Naive thymus-derived CD4-positive, alpha-beta T cell (primary cell): ENCODE measurements at regions of chr15 and their contacts with region 1.

Region 1: DNA sequence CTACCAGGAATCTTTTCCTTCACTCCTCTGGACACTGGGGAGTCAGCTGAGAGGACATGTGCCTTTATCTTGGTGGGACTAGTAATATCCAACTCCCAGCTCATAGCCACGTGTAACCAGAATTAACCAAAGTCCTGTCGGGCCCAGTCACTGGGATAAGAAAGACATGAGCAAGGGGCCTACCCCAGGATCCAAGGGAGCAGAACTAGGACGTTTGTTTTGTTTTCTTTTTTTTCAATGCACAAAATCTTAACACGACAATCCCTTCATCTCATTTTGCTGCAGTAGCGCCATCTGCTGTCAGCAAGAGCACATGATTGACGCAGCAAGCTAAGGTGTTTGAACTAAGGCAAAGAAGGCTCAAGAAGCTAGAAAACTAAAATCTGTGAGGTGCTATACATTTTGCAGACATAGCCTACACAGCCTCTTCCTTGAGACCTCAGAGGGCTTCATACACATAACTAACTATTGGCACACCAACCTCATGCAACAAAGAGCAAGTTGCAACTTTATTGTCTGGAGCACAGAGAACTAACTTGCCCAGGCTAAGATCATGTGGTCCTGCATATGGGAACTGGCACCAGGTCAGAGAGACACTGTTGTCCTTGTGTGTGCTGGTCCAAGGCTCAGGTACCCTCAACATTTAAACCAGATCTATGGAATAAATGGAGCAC is 43.6 kb downstream of the RLBP1 start:
- DNase-seq: peak; percentile 15 to 66 (median 48)
- ATAC-seq: peak; percentile 63
- H3K4me3 ChIP-seq: no peak overlapping the region
- H3K4me3 Mint-ChIP-seq: no peak overlapping the region
- H3K27ac ChIP-seq: no peak overlapping the region
- H3K27ac Mint-ChIP-seq: peak overlapping the region in 2 of 9 donors; percentile 46 to 72
- H3K4me1 ChIP-seq: no peaks in the 10 kb centered on the region
- H3K4me1 Mint-ChIP-seq: peaks cover 5 to 17% (median 7%) of the 10 kb centered on the region in 7 donors
- H3K27me3 ChIP-seq: no peaks in the 10 kb centered on the region
- H3K27me3 Mint-ChIP-seq: no peaks in the 10 kb centered on the region

Region 2: DNA sequence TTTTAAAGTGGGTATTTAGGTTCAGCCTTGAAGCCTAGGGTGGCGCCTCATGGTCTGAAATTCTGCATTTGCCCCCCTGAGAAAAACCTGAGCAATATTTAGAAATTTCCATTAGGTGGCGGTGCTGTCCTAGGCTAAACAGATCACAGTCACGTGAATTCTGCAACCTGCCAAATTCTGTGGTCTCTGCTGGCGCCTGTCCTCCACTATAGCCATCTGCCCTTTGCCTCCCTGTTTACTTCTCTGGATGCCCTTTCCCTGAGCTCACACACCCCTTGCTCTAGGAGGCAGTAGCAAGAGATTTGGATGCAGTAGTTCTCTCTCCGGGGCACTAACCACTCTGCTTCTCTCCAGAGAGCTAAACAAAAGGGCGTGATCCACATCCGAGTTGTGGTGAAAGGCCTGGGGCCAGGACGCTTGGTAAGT is 701.1 kb before region 1 on chr15:
- CTCF ChIA-PET with region 1: no interaction called
- POLR2A ChIA-PET with region 1: no interaction called
- intact Hi-C with region 1: loop called in 1 of 2 experiments (anchors 5 kb)
- DNase-seq: peak in 5 of 9 donors; percentile 22 to 45 (median 40)
- ATAC-seq: peak; percentile 55
- H3K4me3 ChIP-seq: no peak overlapping the region
- H3K4me3 Mint-ChIP-seq: no peak overlapping the region
- H3K27ac ChIP-seq: no peak overlapping the region
- H3K27ac Mint-ChIP-seq: no peak overlapping the region
- H3K4me1 ChIP-seq: no peaks in the 10 kb centered on the region
- H3K4me1 Mint-ChIP-seq: peaks cover 0 to 6% (median 0%) of the 10 kb centered on the region in 7 donors
- H3K27me3 ChIP-seq: no peaks in the 10 kb centered on the region
- H3K27me3 Mint-ChIP-seq: no peaks in the 10 kb centered on the region

Region 3: DNA sequence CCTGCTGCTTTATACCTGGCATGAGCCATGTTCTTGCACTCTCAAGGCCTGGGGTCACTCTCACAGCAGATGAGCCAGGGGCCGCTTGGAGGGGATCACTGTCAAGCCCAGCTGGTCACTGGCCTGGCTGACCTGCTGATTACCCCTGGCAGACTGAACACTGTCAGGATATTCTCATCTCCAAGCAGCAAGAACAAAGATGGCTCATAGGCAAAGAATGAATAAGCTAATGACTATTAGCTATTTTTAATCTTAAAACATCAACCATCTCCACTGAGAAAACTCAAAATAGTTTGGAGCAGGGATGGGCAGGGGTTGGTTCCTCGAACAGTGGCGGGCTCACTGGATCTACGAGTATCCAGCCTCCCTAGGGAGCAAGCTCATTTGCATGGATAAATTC is 439.0 kb before region 1 on chr15:
- CTCF ChIA-PET with region 1: no interaction called
- POLR2A ChIA-PET with region 1: no interaction called
- intact Hi-C with region 1: no loop called
- DNase-seq: no peak
- ATAC-seq: no peak
- H3K4me3 ChIP-seq: no peak overlapping the region
- H3K4me3 Mint-ChIP-seq: no peak overlapping the region
- H3K27ac ChIP-seq: no peak overlapping the region
- H3K27ac Mint-ChIP-seq: no peak overlapping the region
- H3K4me1 ChIP-seq: no peaks in the 10 kb centered on the region
- H3K4me1 Mint-ChIP-seq: no peaks in the 10 kb centered on the region
- H3K27me3 ChIP-seq: no peaks in the 10 kb centered on the region
- H3K27me3 Mint-ChIP-seq: peaks cover 11 to 38% (median 34%) of the 10 kb centered on the region in 5 donors

Region 4: DNA sequence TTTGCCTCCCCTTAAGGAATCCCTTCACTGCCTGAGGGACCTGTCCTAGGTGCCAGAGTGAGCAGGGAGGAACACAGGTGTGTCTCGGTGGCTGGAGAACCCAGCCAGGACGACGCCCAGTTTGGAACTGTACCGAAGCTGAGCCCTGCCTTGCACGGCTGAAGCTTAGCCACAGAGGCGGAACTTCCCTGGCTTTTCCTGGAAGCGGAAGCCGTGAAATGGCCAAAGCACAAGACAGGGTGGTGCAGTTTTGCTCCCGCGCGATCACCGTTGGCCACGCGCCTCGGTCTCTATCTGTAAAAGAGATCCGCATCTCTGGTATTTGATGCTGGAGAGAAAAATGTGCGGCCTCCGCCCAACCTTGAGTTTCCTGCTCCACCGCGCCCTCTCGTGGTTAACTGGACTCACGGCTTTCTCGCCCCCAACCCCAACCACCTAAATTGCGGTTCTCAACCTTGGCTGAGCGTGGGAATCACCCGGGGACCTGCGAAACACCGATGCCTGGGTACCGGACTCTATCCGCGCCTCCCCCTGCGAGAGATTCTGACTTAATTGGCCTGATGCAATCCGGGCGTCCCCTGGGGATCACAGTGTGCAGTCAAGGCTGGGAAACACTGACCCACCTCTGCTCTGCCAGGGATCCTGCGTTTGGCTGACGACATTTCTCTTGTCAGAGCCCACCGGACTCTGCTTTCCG is 160.3 kb before region 1 on chr15:
- CTCF ChIA-PET with region 1: interaction called, 10 read pairs
- POLR2A ChIA-PET with region 1: no interaction called
- intact Hi-C with region 1: no loop called
- DNase-seq: peak; percentile 73 to 88 (median 82)
- ATAC-seq: peak; percentile 96
- H3K4me3 ChIP-seq: peak overlapping the region; percentile 31
- H3K4me3 Mint-ChIP-seq: peak overlapping the region; percentile 56 to 83 (median 70)
- H3K27ac ChIP-seq: no peak overlapping the region
- H3K27ac Mint-ChIP-seq: peak overlapping the region; percentile 26 to 91 (median 78)
- H3K4me1 ChIP-seq: peaks cover 10 to 13% of the 10 kb centered on the region in 2 donors
- H3K4me1 Mint-ChIP-seq: peaks cover under 1 to 28% (median 13%) of the 10 kb centered on the region in 7 donors
- H3K27me3 ChIP-seq: no peaks in the 10 kb centered on the region
- H3K27me3 Mint-ChIP-seq: peaks cover 0 to 45% (median 0%) of the 10 kb centered on the region in 5 donors

Region 5: GRCh38 chr15:89057504-89058133 is 120.2 kb before region 1 on chr15:
- CTCF ChIA-PET with region 1: interaction called, 14 read pairs
- POLR2A ChIA-PET with region 1: interaction called, 4 read pairs
- intact Hi-C with region 1: loop called (anchors 1 kb)
- DNase-seq: peak; percentile 66 to 87 (median 78)
- ATAC-seq: peak; percentile 99
- H3K4me3 ChIP-seq: no peak overlapping the region
- H3K4me3 Mint-ChIP-seq: no peak overlapping the region
- H3K27ac ChIP-seq: no peak overlapping the region
- H3K27ac Mint-ChIP-seq: peak overlapping the region in 3 of 9 donors; percentile 25 to 62 (median 26)
- H3K4me1 ChIP-seq: no peaks in the 10 kb centered on the region
- H3K4me1 Mint-ChIP-seq: peaks cover 0 to 11% (median 5%) of the 10 kb centered on the region in 7 donors
- H3K27me3 ChIP-seq: no peaks in the 10 kb centered on the region
- H3K27me3 Mint-ChIP-seq: peaks cover 0 to 3% (median 0%) of the 10 kb centered on the region in 5 donors

Region 6: GRCh38 chr15:89167267-89168176 is 10.2 kb before region 1 on chr15:
- CTCF ChIA-PET with region 1: interaction called, 27 read pairs
- POLR2A ChIA-PET with region 1: interaction called, 3 read pairs
- intact Hi-C with region 1: no loop called
- DNase-seq: peak in 1 of 9 donors; percentile 61
- ATAC-seq: peak; percentile 24
- H3K4me3 ChIP-seq: no peak overlapping the region
- H3K4me3 Mint-ChIP-seq: peak overlapping the region in 1 of 10 donors; percentile 58
- H3K27ac ChIP-seq: no peak overlapping the region
- H3K27ac Mint-ChIP-seq: peak overlapping the region in 6 of 9 donors; percentile 40 to 79 (median 68)
- H3K4me1 ChIP-seq: no peaks in the 10 kb centered on the region
- H3K4me1 Mint-ChIP-seq: peaks cover 0 to 11% (median 4%) of the 10 kb centered on the region in 7 donors
- H3K27me3 ChIP-seq: no peaks in the 10 kb centered on the region
- H3K27me3 Mint-ChIP-seq: no peaks in the 10 kb centered on the region